ENCODE measurements at regions of chr15 and their contacts with region 1.

Region 1: GRCh38 chr15:52735231-52736089 is 54.7 kb downstream of the ONECUT1 start:
- DNase-seq: peak; percentile 74
- CTCF ChIP-seq: peak; percentile 51

Region 2: DNA sequence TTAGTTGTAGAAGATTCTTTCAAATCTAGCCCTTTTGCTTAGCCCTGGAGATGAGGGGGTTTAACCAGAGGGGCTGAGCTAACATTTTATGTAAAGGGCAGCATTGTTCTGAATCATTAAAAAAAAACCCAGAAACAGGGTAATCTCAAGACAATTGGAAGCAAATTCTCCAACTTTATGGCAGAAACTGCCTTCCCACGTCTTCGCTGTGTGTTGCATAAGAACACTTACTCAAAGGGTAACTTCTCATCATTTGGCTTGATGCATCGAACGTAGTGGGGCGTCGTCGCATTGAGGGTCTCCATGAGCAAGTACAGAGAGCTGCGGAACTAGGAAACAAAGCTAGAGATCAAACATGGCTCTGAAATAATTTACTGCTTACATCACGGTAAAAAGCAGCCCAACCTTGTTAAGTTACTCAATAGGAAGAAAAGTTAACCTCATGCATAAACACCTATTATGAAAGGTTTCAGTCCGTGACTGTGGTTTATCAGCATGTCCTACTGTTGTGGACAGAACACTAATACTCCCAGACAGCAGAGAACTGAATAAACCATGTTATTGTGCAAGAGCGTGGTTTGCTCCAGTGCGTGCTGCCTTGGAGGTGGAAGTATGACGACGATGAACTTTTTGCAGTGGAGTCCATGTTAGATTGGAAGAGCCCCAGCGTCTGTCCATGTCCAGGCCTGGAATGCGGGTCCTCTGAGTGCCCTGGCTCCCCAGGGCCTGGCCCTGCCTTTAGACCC is 488.6 kb before region 1 on chr15:
- in situ Hi-C with region 1: loop called (anchors 10 kb)
- DNase-seq: no peak
- CTCF ChIP-seq: no peak

Region 3: DNA sequence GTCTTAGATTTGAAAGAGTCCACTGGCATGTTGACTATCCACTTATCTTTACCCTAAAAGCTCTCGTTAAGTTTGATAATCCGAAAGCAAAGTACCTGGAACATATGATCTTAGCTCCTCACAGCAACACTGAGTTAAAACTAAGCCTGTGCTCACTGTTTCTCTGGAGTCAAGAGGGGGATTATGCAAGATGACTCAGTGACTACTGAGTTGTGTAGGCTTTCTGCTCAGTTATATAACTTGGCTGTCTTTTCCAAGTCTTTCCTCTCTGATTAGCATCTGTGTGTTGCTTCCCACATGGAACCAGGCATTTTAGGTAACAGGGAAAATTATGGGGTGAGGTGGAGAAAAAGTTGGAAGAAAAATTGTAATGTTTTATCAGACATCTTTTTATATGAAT is 408.7 kb before region 1 on chr15:
- in situ Hi-C with region 1: loop called (anchors 10 kb)
- DNase-seq: no peak
- CTCF ChIP-seq: no peak

Region 4: GRCh38 chr15:52844823-52845222 is 109.4 kb after region 1 on chr15:
- in situ Hi-C with region 1: no loop called
- DNase-seq: no peak
- CTCF ChIP-seq: no peak

Measured in GM13976 (cell line).